ENCODE measurements at regions of chr9 and their contacts with region 1.

Region 1: DNA sequence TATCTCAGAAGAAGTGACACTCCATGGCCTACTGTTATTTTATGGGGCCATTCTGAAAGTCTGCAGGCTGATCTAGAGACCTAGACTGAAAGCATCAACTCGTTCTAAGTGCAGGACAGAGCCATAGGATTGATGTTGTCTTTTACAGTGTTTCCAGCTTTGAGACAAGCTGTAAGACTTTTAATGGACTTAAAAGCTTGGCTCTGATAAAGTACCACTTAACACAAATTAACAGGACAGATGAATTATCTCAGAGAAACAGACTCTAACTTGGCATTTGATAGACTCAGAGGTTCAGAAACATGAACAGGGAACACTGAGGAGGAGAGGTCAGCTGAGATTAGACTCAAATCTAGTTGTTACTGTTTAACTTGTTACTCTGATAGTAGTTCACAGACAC is 203.2 kb downstream of the TLR4 start:
- DNase-seq: no peak
- ATAC-seq: no peak

Region 2: GRCh38 chr9:117957267-117957666 is 49.8 kb after region 1 on chr9:
- intact Hi-C with region 1: loop called in 1 of 2 experiments (anchors 10 kb)
- DNase-seq: no peak
- ATAC-seq: no peak

Measured in left colon (tissue), 2 donors.